Activated CD8-positive, alpha-beta T cell treated with anti-CD3 and anti-CD28 coated beads, Interleukin-2, amount 10 ng/mL, durations not matched to agents 7 days and 5 days (primary cell): ENCODE measurements at regions of chr17 and their contacts with region 1.

Region 1: DNA sequence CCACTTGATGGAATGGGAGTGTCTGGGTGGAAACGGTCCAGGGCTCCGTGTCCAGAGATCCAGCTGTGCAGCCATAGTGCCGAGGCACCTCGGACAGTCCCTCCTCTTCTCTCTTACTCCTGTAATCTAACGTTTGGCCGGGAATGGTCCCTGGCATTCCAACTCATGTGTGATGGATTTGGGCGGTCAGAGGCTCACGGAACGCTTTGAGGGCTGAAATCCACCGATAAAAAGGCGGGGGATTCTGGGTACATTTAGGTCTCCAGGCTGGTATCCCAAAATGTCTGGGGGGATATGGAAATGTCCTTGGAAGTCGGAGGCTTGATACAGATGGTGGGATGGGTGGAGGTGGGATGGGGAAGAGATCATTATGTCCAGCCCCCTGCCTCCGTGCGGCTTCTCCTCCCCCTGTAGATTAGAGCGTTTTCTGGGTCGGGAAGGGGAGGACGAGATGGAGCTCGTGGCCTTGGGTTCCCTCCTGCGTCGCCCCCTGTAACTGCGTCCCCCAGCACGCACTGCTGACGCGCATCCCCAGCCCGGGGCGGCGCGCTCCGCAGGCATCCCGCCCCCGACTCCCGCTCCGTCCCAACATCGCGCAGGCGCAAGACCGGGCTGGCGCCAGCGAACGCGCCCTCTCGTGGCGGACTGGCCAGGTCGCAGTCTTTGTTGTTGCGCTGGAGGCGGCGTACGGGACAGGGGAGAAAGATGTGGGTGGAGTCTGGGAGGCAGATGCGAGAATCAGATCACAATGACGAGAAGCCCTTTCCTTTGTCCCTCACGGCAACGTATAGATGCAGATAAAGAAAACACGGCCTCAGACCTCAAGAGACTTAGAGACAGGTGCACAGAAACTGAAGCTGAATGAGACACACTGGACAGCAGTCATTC is 4.5 kb upstream of the SGCA start:
- DNase-seq: peak; percentile 96
- ATAC-seq: peak; percentile 97
- H3K4me3 Mint-ChIP-seq: peak overlapping the region; percentile 75
- H3K27ac Mint-ChIP-seq: peak overlapping the region; percentile 88
- H3K4me1 Mint-ChIP-seq: peaks cover 49% of the 10 kb centered on the region
- H3K27me3 Mint-ChIP-seq: peaks cover 7% of the 10 kb centered on the region

Region 2: GRCh38 chr17:49997791-49998703 is 163.2 kb before region 1 on chr17:
- CTCF ChIA-PET with region 1: no interaction called
- POLR2A ChIA-PET with region 1: no interaction called
- DNase-seq: peak; percentile 92
- ATAC-seq: peak; percentile 86
- H3K4me3 Mint-ChIP-seq: no peak overlapping the region
- H3K27ac Mint-ChIP-seq: no peak overlapping the region
- H3K4me1 Mint-ChIP-seq: peaks cover 29% of the 10 kb centered on the region
- H3K27me3 Mint-ChIP-seq: peaks cover 57% of the 10 kb centered on the region

Region 3: DNA sequence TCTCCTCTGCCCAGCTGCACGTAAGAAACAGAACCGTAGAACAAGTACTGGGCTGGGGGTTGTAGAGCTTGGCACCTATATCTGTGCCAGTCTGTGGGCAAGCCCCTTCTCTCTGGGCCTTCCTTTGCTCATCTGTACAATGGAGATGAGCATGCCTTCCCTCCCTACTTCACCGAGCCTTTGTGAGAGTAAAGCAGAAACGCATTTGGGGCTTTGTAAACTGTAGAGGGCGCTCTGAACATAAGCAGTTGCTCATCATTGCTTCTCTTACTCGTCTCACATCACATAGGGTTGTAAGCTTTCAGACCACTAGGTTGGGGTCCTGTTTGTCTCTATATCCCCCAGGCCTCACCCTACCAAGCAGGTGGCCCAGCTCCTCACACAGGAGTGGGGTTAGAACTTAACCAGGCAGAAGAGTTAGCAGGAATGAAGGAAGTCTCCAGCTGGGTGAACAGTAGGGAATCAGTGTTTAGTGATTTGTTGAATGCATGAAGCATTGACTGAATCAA is 46.4 kb before region 1 on chr17:
- CTCF ChIA-PET with region 1: interaction called, 52 read pairs
- POLR2A ChIA-PET with region 1: interaction called, 3 read pairs
- DNase-seq: peak; percentile 73
- ATAC-seq: peak; percentile 46
- H3K4me3 Mint-ChIP-seq: no peak overlapping the region
- H3K27ac Mint-ChIP-seq: no peak overlapping the region
- H3K4me1 Mint-ChIP-seq: peaks cover 11% of the 10 kb centered on the region
- H3K27me3 Mint-ChIP-seq: peaks cover 40% of the 10 kb centered on the region

Region 4: GRCh38 chr17:50123649-50124349 is 37.5 kb before region 1 on chr17:
- CTCF ChIA-PET with region 1: interaction called, 52 read pairs
- POLR2A ChIA-PET with region 1: interaction called, 3 read pairs
- DNase-seq: no peak
- ATAC-seq: no peak
- H3K4me3 Mint-ChIP-seq: no peak overlapping the region
- H3K27ac Mint-ChIP-seq: no peak overlapping the region
- H3K4me1 Mint-ChIP-seq: peaks cover 12% of the 10 kb centered on the region
- H3K27me3 Mint-ChIP-seq: peaks cover 57% of the 10 kb centered on the region

Region 5: GRCh38 chr17:50129728-50130558 is 31.3 kb before region 1 on chr17 and contains the start of gene SAMD14:
- CTCF ChIA-PET with region 1: interaction called, 11 read pairs
- POLR2A ChIA-PET with region 1: interaction called, 4 read pairs
- DNase-seq: peak; percentile 64
- ATAC-seq: peak; percentile 65
- H3K4me3 Mint-ChIP-seq: peak within 1 kb of the TSS; percentile 49
- H3K27ac Mint-ChIP-seq: no peak within 1 kb of the TSS
- H3K4me1 Mint-ChIP-seq: peaks cover 34% of the 10 kb centered on the region
- H3K27me3 Mint-ChIP-seq: peaks cover 37% of the 10 kb centered on the region
- total RNA-seq, gene SAMD14: 0.50 to 0.55 TPM

Region 6: GRCh38 chr17:50139950-50140871 is 21.1 kb before region 1 on chr17:
- CTCF ChIA-PET with region 1: interaction called, 118 read pairs
- POLR2A ChIA-PET with region 1: interaction called, 6 read pairs
- DNase-seq: peak; percentile 88
- ATAC-seq: peak; percentile 90
- H3K4me3 Mint-ChIP-seq: peak overlapping the region; percentile 62
- H3K27ac Mint-ChIP-seq: peak overlapping the region; percentile 90
- H3K4me1 Mint-ChIP-seq: peaks cover 62% of the 10 kb centered on the region
- H3K27me3 Mint-ChIP-seq: no peaks in the 10 kb centered on the region

Region 7: DNA sequence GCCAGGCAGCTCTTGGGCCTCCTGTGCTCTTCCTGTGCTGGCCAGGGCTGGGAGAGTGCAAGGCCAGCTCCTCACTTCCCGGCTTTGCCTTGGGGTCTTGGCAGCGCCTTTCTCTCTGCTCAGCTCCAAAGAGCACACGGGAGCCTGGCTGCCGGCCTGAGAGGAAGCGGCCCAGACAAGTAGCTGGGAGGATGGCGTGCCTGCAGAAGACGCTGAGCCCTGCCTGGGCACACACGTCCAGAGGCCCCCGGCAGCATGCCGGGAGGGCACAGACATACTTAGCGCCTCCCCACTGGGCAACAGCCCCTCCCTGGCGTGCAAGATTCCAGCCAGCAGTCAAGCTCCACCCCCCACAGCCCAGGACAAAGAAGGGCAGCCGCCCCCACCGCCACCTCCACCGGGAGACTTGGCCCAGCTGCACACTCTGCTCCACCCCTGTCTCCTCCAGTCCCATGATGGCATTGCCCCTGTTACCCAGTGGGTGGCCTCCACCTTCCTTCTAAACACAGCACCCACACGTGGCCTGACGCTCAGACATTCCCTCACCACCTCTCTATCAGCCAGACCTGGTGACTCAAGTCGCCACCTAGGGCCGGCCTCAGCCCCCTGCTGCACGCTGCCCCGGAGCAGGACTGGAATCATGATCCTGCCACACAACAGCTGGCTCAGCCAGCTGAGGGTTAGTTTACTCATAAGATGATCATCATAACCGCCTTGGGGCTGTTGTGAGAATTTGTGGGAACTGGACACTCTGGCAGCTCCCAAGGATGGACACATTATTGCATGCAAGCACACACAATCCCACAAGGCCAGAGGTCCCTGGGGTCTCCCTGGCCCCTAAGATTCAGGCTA is 16.9 kb after region 1 on chr17:
- CTCF ChIA-PET with region 1: interaction called, 10 read pairs
- POLR2A ChIA-PET with region 1: no interaction called
- DNase-seq: peak; percentile 52
- ATAC-seq: peak; percentile 87
- H3K4me3 Mint-ChIP-seq: no peak overlapping the region
- H3K27ac Mint-ChIP-seq: no peak overlapping the region
- H3K4me1 Mint-ChIP-seq: peaks cover 20% of the 10 kb centered on the region
- H3K27me3 Mint-ChIP-seq: no peaks in the 10 kb centered on the region

Region 8: DNA sequence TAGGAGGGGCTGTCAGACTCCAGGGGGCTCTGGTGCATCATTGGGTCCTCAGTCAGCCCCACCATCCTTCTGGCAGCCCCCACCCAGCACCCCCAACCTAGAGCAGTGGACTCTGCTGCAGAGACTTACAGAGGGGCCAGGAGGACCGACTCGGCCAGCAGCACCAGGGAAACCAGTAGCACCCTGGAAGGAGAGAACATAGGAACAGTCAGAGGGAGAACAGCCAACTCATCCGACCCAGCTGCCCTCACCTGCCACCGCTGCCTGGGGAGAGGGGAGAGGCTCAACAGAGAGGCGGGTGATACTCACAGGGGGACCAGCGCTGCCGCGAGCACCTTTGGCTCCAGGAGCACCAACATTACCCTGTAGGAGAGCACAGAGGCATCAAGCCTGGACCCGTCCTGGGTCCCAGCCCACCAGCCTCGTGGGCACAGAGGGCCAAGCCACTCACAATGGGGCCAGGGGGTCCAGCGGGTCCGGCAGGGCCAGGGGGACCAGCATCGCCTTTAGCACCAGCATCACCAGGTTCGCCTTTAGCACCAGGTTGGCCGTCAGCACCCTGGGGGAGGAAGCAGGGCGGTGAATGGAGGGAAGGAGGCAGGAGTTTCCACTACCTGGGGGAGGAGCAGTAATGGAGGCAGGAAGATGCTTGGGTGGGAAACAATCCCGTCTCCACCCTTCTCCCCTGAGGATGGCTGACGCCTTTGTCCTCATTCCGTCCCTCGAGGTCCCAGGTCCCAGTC is 28.5 kb after region 1 on chr17:
- CTCF ChIA-PET with region 1: no interaction called
- POLR2A ChIA-PET with region 1: no interaction called
- DNase-seq: no peak
- ATAC-seq: no peak
- H3K4me3 Mint-ChIP-seq: no peak overlapping the region
- H3K27ac Mint-ChIP-seq: no peak overlapping the region
- H3K4me1 Mint-ChIP-seq: no peaks in the 10 kb centered on the region
- H3K27me3 Mint-ChIP-seq: no peaks in the 10 kb centered on the region